A549 (cell line): ENCODE measurements at regions of chr19 and their contacts with region 1.

Region 1: GRCh38 chr19:1249298-1249989 is 1.1 kb downstream of the MIDN start:
- DNase-seq: peak in 1 of 2 experiments; percentile 93
- ATAC-seq: peak; percentile 2 to 5; a peak in 4 of 6 replicates
- H3K4me3 ChIP-seq: peak overlapping the region; percentile 97
- H3K27ac ChIP-seq: peak overlapping the region; percentile 100
- H3K4me1 ChIP-seq: peaks cover 41% of the 10 kb centered on the region
- CTCF ChIP-seq: no peak; the same call in 2 of the 3 replicates
- EP300 ChIP-seq: no peak
- POLR2A ChIP-seq: peak; percentile 91
- RAD21 ChIP-seq: no peak

Region 2: GRCh38 chr19:929523-930258 is 319.8 kb before region 1 on chr19:
- CTCF ChIA-PET with region 1: no interaction called
- POLR2A ChIA-PET with region 1: no interaction called
- DNase-seq: no peak
- ATAC-seq: no peak
- H3K4me3 ChIP-seq: no peak overlapping the region
- H3K27ac ChIP-seq: no peak overlapping the region
- H3K4me1 ChIP-seq: peaks cover 39% of the 10 kb centered on the region
- CTCF ChIP-seq: no peak
- EP300 ChIP-seq: no peak
- POLR2A ChIP-seq: no peak
- RAD21 ChIP-seq: no peak

Region 3: DNA sequence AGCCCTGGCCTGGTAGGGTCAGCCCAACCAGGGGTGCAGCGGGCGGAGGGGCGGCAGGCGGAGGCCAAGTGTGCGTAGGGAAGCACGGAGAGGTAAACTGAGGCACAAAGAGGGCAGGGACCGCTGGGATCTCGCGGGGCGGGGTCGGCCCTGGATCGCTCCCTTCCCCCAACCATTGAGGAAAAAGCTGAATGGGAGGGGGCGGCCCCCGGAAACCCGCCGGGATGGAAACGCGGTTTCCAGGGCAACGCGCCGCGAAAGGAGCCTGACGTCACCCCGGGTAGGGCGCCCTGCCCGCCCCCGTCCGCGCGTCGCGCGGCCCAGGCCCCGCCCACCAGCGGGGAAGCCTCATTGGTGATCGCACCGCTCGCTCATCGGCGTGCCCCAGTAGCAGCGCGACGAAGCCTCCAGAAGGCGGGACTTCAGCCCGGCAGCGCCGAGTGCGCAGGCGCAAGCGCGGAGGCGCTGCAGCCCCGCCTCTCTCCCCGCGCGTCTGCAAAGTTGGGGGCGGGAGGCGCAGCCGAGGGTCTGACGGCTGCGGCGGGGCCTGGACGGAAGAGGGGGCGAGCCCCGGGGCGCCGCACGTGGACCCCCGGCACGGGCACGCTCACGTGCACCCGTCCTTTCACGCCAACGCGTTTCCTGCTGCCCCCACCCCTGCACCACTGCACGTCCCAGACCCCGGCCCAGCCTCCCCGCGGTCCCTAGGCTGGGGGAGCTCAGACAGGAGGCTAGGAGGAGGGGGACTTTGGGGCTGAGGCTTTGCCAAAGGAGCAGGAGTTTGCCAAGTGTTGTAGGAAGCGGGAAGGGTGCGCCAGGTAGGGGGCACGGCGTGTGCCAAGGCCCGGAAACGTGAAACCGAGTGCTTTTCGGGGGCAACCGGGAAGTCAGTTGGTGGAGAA is 11.4 kb after region 1 on chr19:
- CTCF ChIA-PET with region 1: interaction called, 500 read pairs
- POLR2A ChIA-PET with region 1: interaction called, 42 read pairs
- DNase-seq: peak; percentile 69 to 95
- ATAC-seq: peak; percentile 32 to 67
- H3K4me3 ChIP-seq: peak overlapping the region; percentile 73
- H3K27ac ChIP-seq: peak overlapping the region; percentile 98 to 100
- H3K4me1 ChIP-seq: peaks cover 76% of the 10 kb centered on the region
- CTCF ChIP-seq: no peak
- EP300 ChIP-seq: no peak; a peak in 1 of 5 replicates
- POLR2A ChIP-seq: peak; percentile 15; the same call in 1 of the 2 replicates
- RAD21 ChIP-seq: no peak